ENCODE measurements at regions of chr11 and their contacts with region 1.

Region 1: DNA sequence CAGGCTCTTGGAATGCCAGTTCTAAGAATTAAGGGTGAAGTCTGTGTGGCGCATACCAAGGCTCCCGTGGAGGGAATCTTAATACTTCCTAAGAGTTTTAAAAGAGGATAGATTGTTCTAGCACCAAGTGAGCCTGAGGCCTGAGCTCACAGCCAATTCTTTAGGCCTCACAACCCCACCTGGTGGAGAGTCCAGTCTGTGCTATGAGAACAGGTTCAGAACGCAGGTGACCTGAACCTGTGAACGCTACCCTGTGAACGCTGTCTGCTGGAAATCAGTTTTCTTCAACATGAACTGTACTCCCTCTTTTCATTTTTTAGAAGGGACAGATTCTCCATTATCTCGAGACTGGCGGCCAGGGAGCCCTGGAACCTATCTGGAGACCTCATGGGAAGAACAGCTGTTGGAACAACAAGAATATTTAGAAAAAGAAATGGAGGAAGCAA is 43.2 kb upstream of the DLAT start:
- DNase-seq: peak; percentile 52
- ATAC-seq: peak; percentile 60

Region 2: DNA sequence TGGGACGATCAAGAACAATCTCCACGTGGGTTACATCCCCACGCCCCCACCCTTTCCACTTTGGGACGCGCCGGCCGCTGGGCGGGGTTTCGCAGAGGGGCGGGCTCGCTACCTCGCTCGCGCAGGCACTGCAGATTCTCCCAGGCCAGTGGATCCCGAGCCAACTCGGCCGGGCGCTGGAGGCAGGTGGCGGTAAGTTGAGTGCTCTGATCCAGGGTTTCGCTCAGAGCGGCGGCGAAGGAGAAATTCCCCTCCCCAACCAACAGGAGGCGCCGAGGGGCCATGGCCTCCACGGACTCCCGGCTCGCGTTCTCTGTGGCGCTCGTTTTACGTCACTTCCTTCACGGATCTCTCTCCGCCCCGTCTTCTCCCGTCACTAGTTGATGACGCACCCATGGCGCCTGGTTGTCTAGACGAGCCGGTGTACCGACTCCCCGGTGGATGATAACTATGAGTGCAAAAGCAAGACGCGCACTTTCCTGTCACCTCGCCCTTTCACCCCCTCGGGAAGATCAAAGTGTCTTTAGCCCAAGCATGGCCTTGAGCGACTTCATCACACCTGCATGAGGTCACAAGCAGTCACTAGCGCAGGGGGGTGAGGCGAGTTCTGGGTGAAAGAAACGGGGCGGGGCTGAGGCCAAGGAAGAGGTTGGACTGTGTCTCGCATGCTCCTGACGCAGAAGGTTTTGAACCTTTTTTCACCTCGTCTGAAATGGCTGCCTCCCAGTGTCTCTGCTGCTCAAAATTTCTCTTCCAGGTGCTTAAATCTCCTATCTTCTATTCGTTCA is 103.0 kb before region 1 on chr11 and contains the starts of genes CFAP68 and FDXACB1:
- intact Hi-C with region 1: loop called (anchors 10 kb)
- DNase-seq: peak; percentile 95
- ATAC-seq: peak; percentile 94
- total RNA-seq, gene CFAP68: 26.1 TPM
- total RNA-seq, gene FDXACB1: 1.3 TPM

Region 3: GRCh38 chr11:111933872-111934271 is 48.2 kb before region 1 on chr11:
- intact Hi-C with region 1: loop called (anchors 5 kb)
- DNase-seq: no peak
- ATAC-seq: no peak

Measured in left ventricle myocardium superior (tissue), 1 donor.